ENCODE measurements at regions of chr11 and their contacts with region 1.

Region 1: DNA sequence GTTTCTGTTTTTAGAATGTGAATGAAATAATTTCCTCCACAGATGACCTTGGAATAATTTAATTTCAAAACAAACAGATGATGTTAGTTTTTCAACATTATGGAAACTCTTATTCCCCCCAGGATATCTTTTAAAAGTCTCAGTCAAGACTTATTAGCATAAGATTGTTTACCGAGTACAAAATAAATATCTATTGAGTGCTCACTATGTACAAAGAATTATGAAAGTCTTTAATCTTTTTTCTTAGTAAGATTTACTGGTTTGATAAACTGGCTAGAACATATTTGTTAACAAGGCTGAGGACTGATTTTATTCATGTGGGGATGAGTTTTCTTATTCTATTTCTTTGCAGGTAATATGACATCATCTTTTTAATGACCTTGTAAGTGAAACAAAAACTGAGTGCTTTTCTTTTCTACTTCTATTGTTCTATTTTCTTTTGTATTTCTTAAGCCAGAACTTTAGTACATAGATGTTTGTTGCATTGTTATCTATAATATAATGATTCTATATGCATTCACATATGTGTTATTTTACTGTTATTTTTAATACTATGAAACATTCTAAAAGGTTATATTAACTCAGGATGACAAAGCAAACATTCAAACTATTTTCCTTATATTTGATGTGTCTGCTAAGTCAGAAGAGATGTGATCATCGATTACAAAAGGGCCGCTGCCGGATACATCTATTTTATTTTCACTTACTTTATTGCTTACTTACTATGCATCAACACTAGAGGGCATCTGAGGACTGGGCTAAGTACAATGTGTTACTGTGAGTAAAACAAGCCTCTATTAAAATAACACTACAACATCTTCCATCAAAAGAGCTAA is 111.0 kb upstream of the ARHGAP42 start:
- DNase-seq: peak in 1 of 6 donors; percentile 15
- ATAC-seq: peak; percentile 63 to 92 (median 87)
- H3K4me3 ChIP-seq: no peak overlapping the region
- H3K27ac ChIP-seq: no peak overlapping the region
- H3K4me1 ChIP-seq: peaks cover 0 to 5% (median 0%) of the 10 kb centered on the region in 3 donors
- H3K27me3 ChIP-seq: no peaks in the 10 kb centered on the region
- CTCF ChIP-seq: peak; percentile 23 to 51 (median 50)

Region 2: DNA sequence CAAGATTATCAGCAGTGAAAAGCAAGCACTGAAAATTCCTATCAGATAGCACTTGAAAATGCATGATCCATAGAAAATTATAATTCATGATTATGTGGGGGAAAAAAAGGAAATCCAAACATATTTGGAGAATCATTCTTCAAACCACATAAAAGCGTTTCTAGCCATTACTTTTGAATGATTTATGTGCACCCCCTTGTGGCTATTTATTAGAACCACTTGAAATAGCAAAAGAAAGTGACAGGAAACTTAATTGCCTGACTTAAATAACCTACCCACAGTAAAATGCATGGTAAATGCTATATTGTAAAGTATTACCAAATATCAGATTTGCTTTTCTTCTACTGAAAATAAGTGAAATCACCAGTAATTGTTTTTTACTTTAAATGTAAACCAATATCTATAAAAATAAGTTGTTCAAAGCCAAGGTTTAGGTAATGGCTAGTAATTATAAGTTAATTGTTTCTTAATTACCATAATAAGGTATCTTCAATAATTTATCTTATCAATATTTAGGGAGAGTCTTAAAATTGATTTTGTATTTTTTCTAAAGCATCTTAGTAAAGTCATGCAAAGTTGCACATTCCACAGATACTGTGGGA is 279.5 kb after region 1 on chr11:
- intact Hi-C with region 1: loop called in 1 of 3 experiments (anchors 10 kb)
- DNase-seq: no peak
- ATAC-seq: peak in 3 of 4 donors; percentile 52 to 56 (median 53)
- H3K4me3 ChIP-seq: no peak overlapping the region
- H3K27ac ChIP-seq: no peak overlapping the region
- H3K4me1 ChIP-seq: no peaks in the 10 kb centered on the region
- H3K27me3 ChIP-seq: peaks cover 0 to 4% (median 0%) of the 10 kb centered on the region in 4 donors
- CTCF ChIP-seq: peak; percentile 7 to 67 (median 40)

Region 3: DNA sequence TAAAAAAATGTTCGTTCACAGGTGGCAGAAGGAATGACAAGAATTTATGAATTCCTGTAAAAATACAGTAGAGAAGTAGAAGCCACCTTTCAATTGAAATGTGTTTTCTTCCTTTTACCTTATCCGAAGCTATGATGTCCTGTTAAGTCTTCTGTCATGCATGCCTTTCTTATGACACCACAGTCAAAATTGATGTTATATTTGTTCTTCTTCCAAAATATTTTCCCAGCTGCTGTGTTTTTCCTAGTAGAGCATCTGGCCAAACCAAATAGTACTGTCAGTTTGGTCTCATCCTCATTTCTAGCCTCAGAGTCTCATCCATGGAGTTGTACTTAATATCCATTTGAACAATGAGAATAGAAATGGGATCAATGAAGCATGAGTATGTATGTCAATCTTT is 347.5 kb after region 1 on chr11:
- intact Hi-C with region 1: loop called in 1 of 3 experiments (anchors 5 kb)
- DNase-seq: no peak
- ATAC-seq: no peak
- H3K4me3 ChIP-seq: no peak overlapping the region
- H3K27ac ChIP-seq: no peak overlapping the region
- H3K4me1 ChIP-seq: no peaks in the 10 kb centered on the region
- H3K27me3 ChIP-seq: no peaks in the 10 kb centered on the region
- CTCF ChIP-seq: no peak

Measured in pancreas (tissue), 10 donors.